Cardiac septum (tissue), 1 donor: ENCODE measurements at regions of chr1 and their contacts with region 1.

Region 1: DNA sequence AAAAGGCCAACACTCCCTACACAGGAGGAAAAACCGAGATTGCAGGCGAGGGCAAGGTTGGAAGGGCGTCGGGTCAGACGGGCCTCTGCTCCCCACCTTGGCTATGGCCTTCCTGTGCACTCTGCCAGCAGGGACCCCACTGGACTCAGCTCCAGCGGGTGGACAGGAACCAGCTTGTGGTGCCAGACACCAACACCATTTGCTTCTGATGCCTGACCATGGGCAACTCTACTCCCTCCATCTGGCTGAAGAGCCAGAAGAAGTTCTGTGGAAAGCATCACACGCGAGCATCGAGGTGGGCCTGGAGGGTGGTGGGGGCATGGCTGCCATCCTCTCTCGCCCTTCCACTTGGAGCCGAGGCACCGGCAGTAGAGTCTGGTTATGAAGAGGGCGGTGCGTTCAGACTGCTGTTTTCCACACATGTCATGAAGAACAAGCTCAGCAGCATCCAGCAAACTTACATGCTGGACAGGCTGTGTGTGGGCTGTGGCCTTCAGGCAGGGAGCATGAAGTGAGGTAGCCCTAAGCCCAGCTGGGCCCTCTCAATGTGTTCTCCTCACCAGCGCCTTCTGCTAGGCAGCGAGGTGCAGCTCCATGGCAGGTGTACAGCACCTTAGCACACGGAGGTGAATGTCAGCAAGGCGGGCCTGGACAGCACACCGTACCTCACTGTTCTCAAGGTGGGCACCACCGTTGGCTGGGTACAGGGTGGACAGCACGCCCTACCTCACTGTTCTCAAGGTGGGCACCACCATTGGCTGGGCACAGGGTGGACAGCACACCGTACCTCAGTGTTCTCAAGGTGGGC is 15.6 kb upstream of the ZNF669 start:
- DNase-seq: no peak

Region 2: GRCh38 chr1:247172996-247173395 is 53.2 kb after region 1 on chr1:
- intact Hi-C with region 1: loop called (anchors 5 kb)
- DNase-seq: no peak